Activated B cell treated with CpG ODN at 0.5 μM for 24 hours (primary cell): ENCODE measurements at regions of chr1 and their contacts with region 1.

Region 1: DNA sequence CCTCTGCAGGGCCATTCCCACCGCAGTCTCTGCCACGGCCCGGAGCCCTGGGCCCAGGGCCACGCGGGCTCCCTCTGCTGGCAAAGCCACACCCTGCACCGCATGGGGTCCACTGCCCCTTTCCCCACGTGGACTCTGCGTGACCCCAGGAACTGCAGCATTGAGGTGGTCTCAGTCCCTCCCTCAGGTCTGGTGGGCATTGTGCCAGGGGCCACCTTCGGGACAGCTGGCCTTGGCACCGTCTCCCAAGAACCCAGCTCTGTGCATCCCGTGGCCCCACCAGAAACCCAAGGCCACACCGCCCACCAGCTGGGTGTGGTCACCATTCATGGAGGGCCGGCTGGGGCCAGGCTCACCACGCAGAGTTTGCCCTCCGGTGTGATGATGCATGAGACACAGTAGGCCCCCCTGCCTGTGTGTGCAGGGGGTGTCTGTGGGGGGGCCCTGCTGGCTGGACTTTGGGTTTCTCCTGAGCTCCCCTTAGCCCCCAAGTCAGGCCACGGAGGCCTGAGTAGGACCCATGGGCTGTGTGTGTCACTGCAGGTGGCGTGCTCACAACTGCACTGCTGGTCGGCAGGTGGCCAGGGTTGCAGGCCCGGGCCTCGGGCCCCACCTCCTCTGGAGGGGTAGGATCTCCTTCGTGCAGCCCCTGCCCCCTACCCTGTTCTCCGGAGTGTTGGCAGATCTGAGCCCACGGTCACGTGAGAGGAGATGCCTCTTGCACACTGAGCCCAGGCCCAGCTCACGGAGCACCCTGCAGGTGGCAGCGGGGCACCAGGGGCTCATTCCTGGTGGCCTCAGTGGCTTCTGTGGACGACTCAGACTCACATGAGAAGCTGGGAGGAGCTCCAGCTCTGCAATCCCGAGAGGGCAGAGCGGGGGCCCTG is 5.8 kb downstream of the VWA1 start:
- DNase-seq: peak; percentile 61
- ATAC-seq: peak; percentile 96
- H3K4me3 Mint-ChIP-seq: no peak overlapping the region
- H3K27ac Mint-ChIP-seq: no peak overlapping the region
- H3K4me1 Mint-ChIP-seq: peaks cover 8% of the 10 kb centered on the region
- H3K27me3 Mint-ChIP-seq: peaks cover 9% of the 10 kb centered on the region
- CTCF ChIP-seq: peak; percentile 57

Region 2: GRCh38 chr1:983799-984473 is 457.3 kb before region 1 on chr1:
- CTCF ChIA-PET with region 1: no interaction called
- POLR2A ChIA-PET with region 1: no interaction called
- intact Hi-C with region 1: loop called (anchors 2 kb)
- DNase-seq: peak; percentile 66
- ATAC-seq: peak; percentile 95
- H3K4me3 Mint-ChIP-seq: no peak overlapping the region
- H3K27ac Mint-ChIP-seq: no peak overlapping the region
- H3K4me1 Mint-ChIP-seq: no peaks in the 10 kb centered on the region
- H3K27me3 Mint-ChIP-seq: peaks cover 23% of the 10 kb centered on the region
- CTCF ChIP-seq: peak; percentile 39

Region 3: DNA sequence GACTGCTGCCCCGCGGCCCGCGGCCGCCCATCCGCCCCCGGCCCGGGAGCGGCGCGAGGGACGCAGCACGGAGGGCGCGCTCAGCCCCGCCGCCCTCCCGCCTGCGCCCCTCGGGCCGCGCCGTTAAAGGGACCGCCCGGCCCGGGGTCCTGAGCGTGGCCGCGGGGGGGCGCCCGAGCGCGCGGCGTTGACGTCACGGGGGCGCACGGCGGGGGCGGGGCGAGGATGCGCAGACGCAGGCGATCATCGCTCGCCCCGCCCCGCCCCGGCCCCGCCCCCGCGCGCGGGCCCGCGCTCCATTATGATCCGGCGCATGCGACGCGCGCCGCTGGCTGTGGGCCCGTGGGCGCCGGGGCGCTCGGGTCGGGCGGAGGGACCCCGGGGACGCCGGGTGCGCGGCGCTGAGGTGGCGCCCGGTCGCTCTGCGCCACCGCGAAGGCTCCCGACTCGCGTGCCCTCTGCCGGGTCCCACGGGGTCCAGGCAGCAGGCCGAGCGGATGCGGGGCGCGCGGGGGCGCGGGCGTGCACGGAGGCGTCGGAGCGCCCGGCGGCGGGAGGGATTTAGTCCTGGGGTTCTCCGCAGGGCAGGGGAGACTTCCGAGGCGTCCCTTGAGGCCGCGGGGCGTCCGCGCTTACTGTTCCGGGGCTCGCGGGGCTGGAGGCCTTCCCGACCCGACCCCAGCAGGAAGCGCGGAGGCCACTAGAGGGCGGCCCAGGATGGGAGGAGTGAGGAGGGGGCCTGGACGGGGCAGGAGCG is 91.8 kb before region 1 on chr1 and contains the start of gene DVL1:
- CTCF ChIA-PET with region 1: no interaction called
- POLR2A ChIA-PET with region 1: no interaction called
- intact Hi-C with region 1: loop called (anchors 5 kb)
- DNase-seq: peak; percentile 75
- ATAC-seq: peak; percentile 84
- H3K4me3 Mint-ChIP-seq: peak within 1 kb of the TSS; percentile 77
- H3K27ac Mint-ChIP-seq: no peak within 1 kb of the TSS
- H3K4me1 Mint-ChIP-seq: peaks cover 30% of the 10 kb centered on the region
- H3K27me3 Mint-ChIP-seq: peaks cover 12% of the 10 kb centered on the region
- CTCF ChIP-seq: no peak
- total RNA-seq, gene DVL1: 29.3 and 30.7 TPM in 2 replicates